CD4-positive, alpha-beta T cell (primary cell): ENCODE measurements at regions of chr2 and their contacts with region 1.

Region 1: DNA sequence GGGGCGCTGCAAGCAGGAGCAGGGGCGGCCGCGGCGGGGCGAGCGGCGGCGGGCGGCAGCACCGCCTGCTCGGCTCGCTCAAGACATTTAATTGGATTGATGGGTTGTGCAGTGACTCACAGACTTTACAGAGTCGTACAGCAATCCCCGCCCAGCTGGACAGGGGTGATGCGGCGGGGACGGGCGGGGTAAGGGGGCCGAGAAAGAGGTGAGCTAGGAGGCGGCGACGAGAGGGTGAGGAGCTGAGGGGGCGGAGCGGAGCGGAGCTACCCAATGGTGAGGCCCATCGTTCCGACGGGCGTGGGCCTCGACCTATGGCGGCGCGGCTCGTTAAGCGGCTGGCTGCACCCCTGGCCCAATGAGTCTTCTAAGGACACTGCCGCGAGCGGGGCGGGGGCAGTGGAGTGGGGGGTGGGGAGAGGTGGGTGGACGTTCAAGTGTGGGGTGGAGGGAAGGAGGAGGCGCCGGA is 97.1 kb upstream of the SERTAD2 start:
- DNase-seq: peak; percentile 92 to 100 (median 96)
- ATAC-seq: peak; percentile 83
- H3K4me3 ChIP-seq: peak overlapping the region; percentile 96
- H3K4me3 Mint-ChIP-seq: peak overlapping the region; percentile 95
- H3K27ac ChIP-seq: peak overlapping the region; percentile 81 to 91
- H3K27ac Mint-ChIP-seq: peak overlapping the region; percentile 92
- H3K4me1 ChIP-seq: peaks cover 16% of the 10 kb centered on the region
- H3K4me1 Mint-ChIP-seq: peaks cover 34% of the 10 kb centered on the region
- H3K27me3 ChIP-seq: no peaks in the 10 kb centered on the region
- H3K27me3 Mint-ChIP-seq: no peaks in the 10 kb centered on the region
- CTCF ChIP-seq: no peak

Region 2: DNA sequence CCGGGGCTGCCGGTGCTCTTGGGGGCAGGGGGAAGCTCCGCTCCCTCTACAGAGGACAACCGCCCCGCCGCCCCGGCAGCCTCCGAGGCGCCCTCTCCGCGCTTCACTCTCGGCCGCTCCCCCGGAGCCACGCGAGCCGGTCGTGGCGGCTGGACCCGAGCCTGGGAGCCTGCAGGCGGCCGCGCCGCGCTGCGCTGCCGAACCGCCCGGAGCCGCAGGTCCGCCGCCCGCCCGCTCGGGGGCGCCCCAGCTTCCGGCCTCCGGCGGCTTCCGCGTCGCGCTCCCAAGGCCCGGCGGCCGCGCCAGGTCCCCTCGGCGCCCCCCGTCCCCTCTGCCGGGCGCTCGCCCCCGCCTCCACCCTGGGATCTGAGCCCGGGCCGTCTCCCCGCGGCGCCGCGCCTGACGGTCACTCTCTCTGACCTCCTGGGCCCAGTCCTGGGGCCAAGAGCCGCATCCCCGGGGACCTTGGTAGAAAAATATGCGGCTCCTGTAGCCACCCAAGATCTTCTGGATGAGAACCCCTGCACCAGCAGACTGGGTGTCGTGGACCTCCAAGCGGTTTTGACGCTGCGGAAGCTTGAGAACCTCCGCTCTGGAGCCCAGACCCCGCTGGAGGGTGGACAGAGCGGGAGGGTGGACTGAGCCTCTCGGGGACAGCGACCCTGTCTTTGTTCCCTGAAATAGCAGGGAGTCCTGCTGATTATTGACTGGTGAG is 141.5 kb before region 1 on chr2:
- CTCF ChIA-PET with region 1: interaction called, 6 read pairs
- POLR2A ChIA-PET with region 1: interaction called, 13 read pairs
- intact Hi-C with region 1: no loop called
- DNase-seq: peak; percentile 38 to 89 (median 64)
- ATAC-seq: peak; percentile 64
- H3K4me3 ChIP-seq: peak overlapping the region; percentile 66
- H3K4me3 Mint-ChIP-seq: peak overlapping the region; percentile 89
- H3K27ac ChIP-seq: no peak overlapping the region
- H3K27ac Mint-ChIP-seq: peak overlapping the region; percentile 72
- H3K4me1 ChIP-seq: peaks cover 41% of the 10 kb centered on the region
- H3K4me1 Mint-ChIP-seq: peaks cover 26% of the 10 kb centered on the region
- H3K27me3 ChIP-seq: no peaks in the 10 kb centered on the region
- H3K27me3 Mint-ChIP-seq: no peaks in the 10 kb centered on the region
- CTCF ChIP-seq: no peak

Region 3: GRCh38 chr2:64730551-64731262 is 20.1 kb before region 1 on chr2:
- CTCF ChIA-PET with region 1: interaction called, 18 read pairs
- POLR2A ChIA-PET with region 1: interaction called, 98 read pairs
- intact Hi-C with region 1: loop called in 1 of 2 experiments (anchors 1 kb)
- DNase-seq: peak; percentile 12 to 77 (median 36)
- ATAC-seq: peak; percentile 78
- H3K4me3 ChIP-seq: peak overlapping the region; percentile 63
- H3K4me3 Mint-ChIP-seq: peak overlapping the region; percentile 88
- H3K27ac ChIP-seq: peak overlapping the region; percentile 71 to 86
- H3K27ac Mint-ChIP-seq: peak overlapping the region; percentile 98
- H3K4me1 ChIP-seq: peaks cover 22% of the 10 kb centered on the region
- H3K4me1 Mint-ChIP-seq: peaks cover 67% of the 10 kb centered on the region
- H3K27me3 ChIP-seq: no peaks in the 10 kb centered on the region
- H3K27me3 Mint-ChIP-seq: no peaks in the 10 kb centered on the region
- CTCF ChIP-seq: no peak

Region 4: GRCh38 chr2:64767670-64768468 is 17.0 kb after region 1 on chr2:
- CTCF ChIA-PET with region 1: interaction called, 16 read pairs
- POLR2A ChIA-PET with region 1: interaction called, 86 read pairs
- intact Hi-C with region 1: loop called (anchors 1 to 2 kb)
- DNase-seq: peak; percentile 36 to 93 (median 62)
- ATAC-seq: peak; percentile 74
- H3K4me3 ChIP-seq: peak overlapping the region; percentile 63
- H3K4me3 Mint-ChIP-seq: peak overlapping the region; percentile 93
- H3K27ac ChIP-seq: peak overlapping the region; percentile 82 to 85
- H3K27ac Mint-ChIP-seq: peak overlapping the region; percentile 81
- H3K4me1 ChIP-seq: peaks cover 6% of the 10 kb centered on the region
- H3K4me1 Mint-ChIP-seq: peaks cover 22% of the 10 kb centered on the region
- H3K27me3 ChIP-seq: no peaks in the 10 kb centered on the region
- H3K27me3 Mint-ChIP-seq: no peaks in the 10 kb centered on the region
- CTCF ChIP-seq: peak; percentile 37

Region 5: DNA sequence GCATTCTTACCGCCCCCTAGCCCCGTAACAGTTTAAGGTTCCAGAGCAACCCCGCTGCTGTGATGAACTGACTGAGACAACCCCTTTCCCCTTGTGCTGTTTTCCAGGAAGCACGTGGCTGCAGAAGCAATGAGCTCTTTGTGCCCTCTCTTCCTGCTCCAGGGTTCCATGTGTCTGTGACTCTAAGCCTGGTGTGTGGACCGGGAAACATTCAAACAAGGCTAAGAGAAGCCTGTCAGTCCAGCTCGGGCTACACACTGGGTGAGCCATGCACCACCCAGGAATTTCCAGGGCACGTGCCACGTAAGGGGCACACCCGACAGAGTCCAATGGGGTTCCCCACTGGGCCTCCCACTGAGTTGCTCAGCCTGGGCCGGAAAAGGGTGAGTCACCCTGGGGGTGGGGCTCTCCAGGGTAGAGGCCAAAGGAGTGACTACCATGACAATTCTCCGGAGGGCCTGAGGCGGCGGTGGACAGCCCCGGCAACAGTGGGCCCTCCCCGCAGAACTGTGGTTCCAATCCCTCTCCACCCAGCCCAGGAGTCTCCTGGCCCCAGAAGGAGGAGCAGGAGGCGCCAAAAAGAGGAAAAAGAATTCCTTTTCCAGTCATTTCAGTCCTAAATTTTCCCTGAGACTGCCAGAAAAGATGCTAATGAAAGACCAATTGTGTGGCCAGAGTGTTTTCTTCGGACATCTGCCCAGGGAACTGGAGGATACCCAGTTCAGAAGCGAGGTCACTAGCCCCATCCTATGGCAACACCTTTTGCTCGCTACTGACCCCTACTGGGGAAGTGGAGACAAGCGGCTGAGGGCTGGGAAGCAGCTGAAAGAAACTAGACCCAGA is 80.5 kb after region 1 on chr2:
- CTCF ChIA-PET with region 1: interaction called, 4 read pairs
- POLR2A ChIA-PET with region 1: interaction called, 20 read pairs
- intact Hi-C with region 1: loop called in 1 of 2 experiments (anchors 1 kb)
- DNase-seq: peak; percentile 66 to 93 (median 77)
- ATAC-seq: peak; percentile 87
- H3K4me3 ChIP-seq: peak overlapping the region; percentile 35
- H3K4me3 Mint-ChIP-seq: no peak overlapping the region
- H3K27ac ChIP-seq: no peak overlapping the region
- H3K27ac Mint-ChIP-seq: no peak overlapping the region
- H3K4me1 ChIP-seq: peaks cover 13% of the 10 kb centered on the region
- H3K4me1 Mint-ChIP-seq: peaks cover 5% of the 10 kb centered on the region
- H3K27me3 ChIP-seq: no peaks in the 10 kb centered on the region
- H3K27me3 Mint-ChIP-seq: no peaks in the 10 kb centered on the region
- CTCF ChIP-seq: peak; percentile 93

Region 6: DNA sequence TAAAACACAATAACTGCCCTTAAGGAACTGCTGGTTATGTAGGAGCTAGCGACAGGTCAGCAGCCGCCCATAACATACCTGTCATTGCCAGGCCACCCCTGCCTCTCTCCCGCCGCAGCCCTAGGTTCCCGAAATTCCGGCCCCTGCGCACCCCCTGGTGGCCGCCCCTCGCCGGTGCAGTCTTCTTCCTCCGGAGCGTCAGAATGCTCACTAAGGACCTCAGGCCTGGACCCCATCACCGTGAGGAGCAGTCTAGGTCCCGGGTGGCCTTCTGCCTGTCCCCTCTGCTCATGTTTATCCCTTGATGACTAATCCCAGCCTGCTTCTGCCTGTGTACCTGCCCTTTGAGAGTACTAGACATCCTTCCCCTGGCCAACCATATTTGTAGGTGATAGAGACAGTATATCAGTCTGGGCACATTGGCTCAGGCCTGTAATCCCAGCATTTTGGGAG is 122.6 kb after region 1 on chr2:
- CTCF ChIA-PET with region 1: no interaction called
- POLR2A ChIA-PET with region 1: no interaction called
- intact Hi-C with region 1: no loop called
- DNase-seq: peak; percentile 53 to 86 (median 74)
- ATAC-seq: peak; percentile 98
- H3K4me3 ChIP-seq: peak overlapping the region; percentile 24
- H3K4me3 Mint-ChIP-seq: peak overlapping the region; percentile 4
- H3K27ac ChIP-seq: no peak overlapping the region
- H3K27ac Mint-ChIP-seq: no peak overlapping the region
- H3K4me1 ChIP-seq: peaks cover 9% of the 10 kb centered on the region
- H3K4me1 Mint-ChIP-seq: peaks cover 7% of the 10 kb centered on the region
- H3K27me3 ChIP-seq: no peaks in the 10 kb centered on the region
- H3K27me3 Mint-ChIP-seq: no peaks in the 10 kb centered on the region
- CTCF ChIP-seq: peak; percentile 96